Gastrocnemius medialis (tissue), 4 donors: ENCODE measurements at regions of chr15 and their contacts with region 1.

Region 1: GRCh38 chr15:63504247-63504978 is at the start of gene USP3:
- DNase-seq: peak; percentile 92 to 95
- ATAC-seq: peak; percentile 74 to 77
- H3K4me3 ChIP-seq: peak within 1 kb of the TSS; percentile 72 to 88 (median 82)
- H3K27ac ChIP-seq: peak within 1 kb of the TSS; percentile 96 to 99 (median 97)
- H3K4me1 ChIP-seq: peaks cover 54 to 59% of the 10 kb centered on the region in 2 donors
- H3K27me3 ChIP-seq: no peaks in the 10 kb centered on the region
- CTCF ChIP-seq: peak; percentile 35 to 61 (median 49)
- POLR2A ChIP-seq: peak; percentile 91 to 94
- total RNA-seq, gene USP3: 12.1 to 29.4 (median 15.5) TPM

Region 2: GRCh38 chr15:63048115-63048775 is 456.2 kb before region 1 on chr15:
- in situ Hi-C with region 1: no loop called
- intact Hi-C with region 1: loop called (anchors 10 kb)
- DNase-seq: peak; percentile 78 to 86
- ATAC-seq: peak; percentile 75 to 78
- H3K4me3 ChIP-seq: peak overlapping the region; percentile 72 to 94 (median 80)
- H3K27ac ChIP-seq: peak overlapping the region; percentile 86 to 96 (median 91)
- H3K4me1 ChIP-seq: peaks cover 70 to 74% of the 10 kb centered on the region in 2 donors
- H3K27me3 ChIP-seq: peaks cover 0 to 19% (median 0%) of the 10 kb centered on the region in 3 donors
- CTCF ChIP-seq: peak; percentile 97 to 99 (median 98)
- POLR2A ChIP-seq: peak; percentile 61 to 74

Region 3: GRCh38 chr15:63178030-63178429 is 326.4 kb before region 1 on chr15:
- in situ Hi-C with region 1: no loop called
- intact Hi-C with region 1: no loop called
- DNase-seq: no peak
- ATAC-seq: no peak
- H3K4me3 ChIP-seq: no peak overlapping the region
- H3K27ac ChIP-seq: no peak overlapping the region
- H3K4me1 ChIP-seq: peaks cover 3 to 6% of the 10 kb centered on the region in 2 donors
- H3K27me3 ChIP-seq: no peaks in the 10 kb centered on the region
- CTCF ChIP-seq: no peak
- POLR2A ChIP-seq: no peak

Region 4: GRCh38 chr15:63322541-63322940 is 181.9 kb before region 1 on chr15:
- in situ Hi-C with region 1: no loop called
- intact Hi-C with region 1: no loop called
- DNase-seq: no peak
- ATAC-seq: no peak
- H3K4me3 ChIP-seq: no peak overlapping the region
- H3K27ac ChIP-seq: no peak overlapping the region
- H3K4me1 ChIP-seq: no peaks in the 10 kb centered on the region
- H3K27me3 ChIP-seq: no peaks in the 10 kb centered on the region
- CTCF ChIP-seq: no peak
- POLR2A ChIP-seq: no peak

Region 5: DNA sequence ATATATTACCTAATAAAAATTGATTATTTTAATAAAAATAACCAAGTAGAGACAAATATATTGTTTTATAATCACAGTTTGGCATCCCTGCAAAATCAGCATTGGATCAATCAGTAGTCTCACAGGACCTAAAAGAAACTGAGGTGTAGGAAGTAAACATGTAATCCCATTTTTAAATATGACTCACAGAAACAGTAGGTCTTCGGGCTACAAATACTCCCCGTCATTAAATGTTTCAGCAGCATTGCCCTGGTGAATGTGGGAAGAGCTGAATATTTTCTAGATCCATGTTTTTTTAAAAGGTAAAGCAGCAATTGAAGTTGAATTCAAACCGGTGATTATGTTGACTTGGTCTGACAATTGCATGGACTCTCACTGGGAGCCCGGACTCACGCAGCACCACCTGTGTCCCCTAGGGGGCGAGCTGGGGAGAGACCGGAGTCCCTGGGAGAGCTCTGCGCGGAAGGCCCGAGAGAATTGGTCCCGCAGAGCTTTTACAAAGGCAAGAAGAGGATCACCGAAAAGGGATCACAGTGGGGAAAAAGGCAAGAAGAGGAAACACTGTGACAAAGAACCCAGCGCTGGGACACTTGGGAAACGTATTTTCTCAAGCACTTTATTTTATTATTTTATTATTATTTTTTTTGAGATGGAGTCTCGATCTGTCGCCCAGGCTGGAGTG is 17.2 kb before region 1 on chr15:
- in situ Hi-C with region 1: no loop called
- intact Hi-C with region 1: loop called (anchors 2 kb)
- DNase-seq: peak; percentile 70 to 78
- ATAC-seq: peak; percentile 88 to 90
- H3K4me3 ChIP-seq: no peak overlapping the region
- H3K27ac ChIP-seq: no peak overlapping the region
- H3K4me1 ChIP-seq: no peaks in the 10 kb centered on the region
- H3K27me3 ChIP-seq: no peaks in the 10 kb centered on the region
- CTCF ChIP-seq: peak; percentile 76 to 94 (median 82)
- POLR2A ChIP-seq: no peak

Region 6: GRCh38 chr15:64093627-64094417 is 589.4 kb after region 1 on chr15 and contains the start of gene CIAO2A:
- in situ Hi-C with region 1: loop called in 1 of 4 experiments (anchors 25 kb)
- intact Hi-C with region 1: loop called (anchors 10 kb)
- DNase-seq: peak; percentile 96 to 97
- ATAC-seq: peak; percentile 81 to 85
- H3K4me3 ChIP-seq: peak within 1 kb of the TSS; percentile 74 to 85 (median 77)
- H3K27ac ChIP-seq: peak within 1 kb of the TSS; percentile 91 to 96 (median 93)
- H3K4me1 ChIP-seq: peaks cover 62 to 65% of the 10 kb centered on the region in 2 donors
- H3K27me3 ChIP-seq: no peaks in the 10 kb centered on the region
- CTCF ChIP-seq: no peak
- POLR2A ChIP-seq: peak; percentile 79 to 84
- total RNA-seq, gene CIAO2A: 26.6 to 65.2 (median 55.1) TPM